SK-N-SH (cell line): ENCODE measurements at regions of chr7 and their contacts with region 1.

Region 1: GRCh38 chr7:136009488-136010079 is 32.4 kb upstream of the MTPN start:
- DNase-seq: peak; percentile 55
- H3K4me3 ChIP-seq: no peak overlapping the region; a peak in 1 of 4 replicates
- H3K27ac ChIP-seq: no peak overlapping the region
- H3K4me1 ChIP-seq: no peaks in the 10 kb centered on the region; a peak in 1 of 4 replicates
- H3K27me3 ChIP-seq: no peaks in the 10 kb centered on the region
- CTCF ChIP-seq: peak; percentile 98
- EP300 ChIP-seq: no peak
- RAD21 ChIP-seq: peak; percentile 94

Region 2: GRCh38 chr7:135795846-135796570 is 213.6 kb before region 1 on chr7:
- CTCF ChIA-PET with region 1: interaction called, 68 read pairs
- POLR2A ChIA-PET with region 1: no interaction called
- DNase-seq: no peak
- H3K4me3 ChIP-seq: no peak overlapping the region
- H3K27ac ChIP-seq: no peak overlapping the region
- H3K4me1 ChIP-seq: no peaks in the 10 kb centered on the region; a peak in 1 of 4 replicates
- H3K27me3 ChIP-seq: no peaks in the 10 kb centered on the region
- CTCF ChIP-seq: no peak
- EP300 ChIP-seq: no peak
- RAD21 ChIP-seq: no peak

Region 3: GRCh38 chr7:135993950-135994349 is 15.6 kb before region 1 on chr7:
- CTCF ChIA-PET with region 1: interaction called, 33 read pairs
- POLR2A ChIA-PET with region 1: no interaction called
- DNase-seq: no peak
- H3K4me3 ChIP-seq: no peak overlapping the region
- H3K27ac ChIP-seq: no peak overlapping the region
- H3K4me1 ChIP-seq: no peaks in the 10 kb centered on the region
- H3K27me3 ChIP-seq: no peaks in the 10 kb centered on the region
- CTCF ChIP-seq: no peak
- EP300 ChIP-seq: no peak
- RAD21 ChIP-seq: no peak

Region 4: DNA sequence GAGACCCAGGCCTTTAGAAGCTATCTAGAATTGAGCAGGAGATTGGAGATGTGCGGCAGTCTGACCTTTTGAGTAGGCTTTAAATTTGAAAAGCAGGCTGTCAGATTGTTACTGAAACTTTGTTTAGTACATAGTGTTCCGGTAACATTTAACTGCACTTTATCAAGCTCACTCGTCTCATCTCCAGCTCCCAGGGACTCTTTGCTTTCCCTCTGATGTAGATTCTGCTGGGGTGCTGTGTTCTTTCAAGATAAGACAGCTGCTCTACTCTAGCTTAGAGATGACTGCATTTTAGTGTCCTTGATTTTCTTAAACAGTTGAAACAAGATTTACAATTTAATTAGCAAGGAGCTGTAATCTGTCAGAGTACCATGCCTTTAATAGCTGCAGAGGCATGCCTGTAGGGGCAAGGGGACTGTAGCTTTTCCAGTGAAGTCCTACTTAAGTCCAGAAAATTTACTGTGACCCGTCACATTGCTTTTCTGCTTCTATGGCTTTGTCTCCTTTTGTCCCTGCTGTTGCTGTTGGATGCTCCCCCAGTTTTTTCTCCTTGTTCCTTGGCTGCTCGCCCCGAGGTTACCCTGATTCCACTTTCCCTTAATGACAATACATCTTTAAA is 23.9 kb after region 1 on chr7:
- CTCF ChIA-PET with region 1: interaction called, 15 read pairs
- POLR2A ChIA-PET with region 1: no interaction called
- DNase-seq: peak; percentile 66
- H3K4me3 ChIP-seq: no peak overlapping the region
- H3K27ac ChIP-seq: peak overlapping the region in 1 of 2 experiments; percentile 84; a peak in 2 of 4 replicates
- H3K4me1 ChIP-seq: peaks cover 0 to 15% of the 10 kb centered on the region in 2 experiments; a peak in 2 of 4 replicates
- H3K27me3 ChIP-seq: no peaks in the 10 kb centered on the region
- CTCF ChIP-seq: no peak
- EP300 ChIP-seq: peak in 1 of 2 experiments; percentile 90; a peak in 2 of 4 replicates
- RAD21 ChIP-seq: no peak; the same call in 1 of the 2 replicates

Region 5: GRCh38 chr7:136189506-136189998 is 180.0 kb after region 1 on chr7:
- CTCF ChIA-PET with region 1: no interaction called
- POLR2A ChIA-PET with region 1: no interaction called
- DNase-seq: no peak
- H3K4me3 ChIP-seq: no peak overlapping the region
- H3K27ac ChIP-seq: no peak overlapping the region
- H3K4me1 ChIP-seq: no peaks in the 10 kb centered on the region
- H3K27me3 ChIP-seq: no peaks in the 10 kb centered on the region
- CTCF ChIP-seq: no peak
- EP300 ChIP-seq: no peak
- RAD21 ChIP-seq: no peak